ENCODE measurements at regions of chr6 and their contacts with region 1.

Region 1: DNA sequence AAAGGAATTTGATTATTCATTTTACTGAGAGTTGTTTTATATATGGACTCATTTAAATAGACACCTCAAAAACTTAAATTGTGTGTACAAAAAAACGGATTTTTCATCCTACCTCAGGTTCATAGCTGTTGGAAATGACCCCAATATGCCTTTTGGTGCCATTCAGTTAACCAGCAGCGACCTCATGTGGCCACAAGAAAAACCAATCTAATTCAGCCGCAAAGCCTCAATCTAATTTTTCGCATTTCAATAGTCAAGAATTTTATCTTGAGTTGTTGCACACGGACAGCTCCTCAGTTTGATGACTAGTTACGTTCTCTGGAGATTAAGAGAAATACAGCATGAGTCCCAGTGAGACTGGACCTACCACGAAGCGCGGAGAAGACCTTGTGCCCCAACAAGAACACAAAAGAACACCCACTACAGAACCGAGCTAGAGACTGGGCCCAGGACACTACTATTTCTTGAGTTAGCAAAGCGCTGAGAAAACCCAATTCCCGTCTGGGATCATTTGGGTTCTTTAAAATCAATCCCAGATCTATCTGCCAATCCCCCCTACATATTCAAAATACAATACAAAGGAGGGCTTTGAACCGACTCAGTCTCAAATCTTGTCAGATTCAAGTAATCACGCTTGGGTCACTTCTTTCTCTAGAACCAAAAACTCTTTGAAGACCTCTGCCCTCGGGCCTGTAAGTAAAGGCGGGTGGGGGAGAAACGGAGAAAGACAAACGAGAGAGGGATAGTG is 1.1 kb downstream of the TCP11 start:
- DNase-seq: peak; percentile 70
- H3K4me3 Mint-ChIP-seq: no peak overlapping the region
- H3K27ac Mint-ChIP-seq: no peak overlapping the region
- H3K4me1 Mint-ChIP-seq: peaks cover 4% of the 10 kb centered on the region
- H3K27me3 Mint-ChIP-seq: no peaks in the 10 kb centered on the region
- CTCF ChIP-seq: peak; percentile 91

Region 2: DNA sequence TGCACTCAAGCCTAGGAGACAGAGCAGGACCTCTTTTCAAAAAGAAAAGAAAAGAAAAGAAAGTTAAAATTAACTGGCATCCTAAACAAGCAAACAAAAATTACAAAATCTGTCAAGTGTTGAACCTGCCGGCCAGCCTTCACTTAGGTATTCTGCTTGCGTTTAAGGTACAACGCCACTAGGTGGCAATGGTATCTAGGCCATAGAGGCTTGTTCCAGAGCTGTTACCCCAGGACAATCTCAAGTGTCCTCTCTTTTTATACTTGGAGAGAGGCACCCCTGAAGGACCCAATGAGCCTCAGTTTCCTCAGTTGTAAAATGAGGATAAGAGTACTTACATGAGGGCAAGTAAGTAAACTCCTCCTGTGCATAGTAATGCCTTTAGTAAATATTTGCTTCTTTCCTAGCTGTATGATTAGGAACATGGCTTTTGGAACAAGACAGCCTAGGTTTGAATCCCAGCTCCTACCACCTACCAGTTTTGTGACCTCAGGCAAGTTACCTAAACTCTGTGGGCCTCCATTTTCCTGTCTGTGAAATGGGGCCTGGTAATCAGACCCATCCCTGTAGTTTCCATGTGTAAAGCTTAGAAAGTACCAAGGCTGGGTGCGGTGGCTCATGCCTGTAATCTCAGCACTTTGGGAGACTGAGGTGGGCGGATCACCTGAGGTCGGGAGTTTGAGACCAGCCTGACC is 680.0 kb before region 1 on chr6:
- CTCF ChIA-PET with region 1: interaction called, 8 read pairs
- POLR2A ChIA-PET with region 1: no interaction called
- intact Hi-C with region 1: loop called (anchors 1 kb)
- DNase-seq: peak; percentile 63
- H3K4me3 Mint-ChIP-seq: no peak overlapping the region
- H3K27ac Mint-ChIP-seq: no peak overlapping the region
- H3K4me1 Mint-ChIP-seq: peaks cover 6% of the 10 kb centered on the region
- H3K27me3 Mint-ChIP-seq: no peaks in the 10 kb centered on the region
- CTCF ChIP-seq: peak; percentile 73

Region 3: GRCh38 chr6:34560366-34561226 is 579.5 kb before region 1 on chr6:
- CTCF ChIA-PET with region 1: no interaction called
- POLR2A ChIA-PET with region 1: no interaction called
- intact Hi-C with region 1: no loop called
- DNase-seq: no peak
- H3K4me3 Mint-ChIP-seq: no peak overlapping the region
- H3K27ac Mint-ChIP-seq: no peak overlapping the region
- H3K4me1 Mint-ChIP-seq: no peaks in the 10 kb centered on the region
- H3K27me3 Mint-ChIP-seq: no peaks in the 10 kb centered on the region
- CTCF ChIP-seq: no peak

Region 4: DNA sequence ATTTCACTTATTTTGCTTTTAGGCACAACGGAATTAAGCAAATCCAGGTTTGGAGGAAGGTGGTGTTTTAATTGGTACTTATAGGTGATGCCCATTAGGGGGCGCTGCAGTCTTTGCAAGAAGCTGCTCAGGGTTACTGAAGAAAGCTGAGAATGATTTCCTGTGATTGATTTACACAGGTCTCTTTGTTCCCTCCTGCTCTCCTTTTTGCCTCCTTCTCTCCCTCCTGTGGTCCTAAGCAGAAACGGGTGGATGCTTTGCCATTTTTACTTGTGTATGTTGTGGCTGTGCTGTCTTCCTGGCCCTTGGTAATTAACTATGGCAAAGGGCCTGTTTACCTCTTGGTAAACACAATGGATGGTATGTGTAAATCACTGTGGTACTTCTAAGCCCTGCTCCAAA is 153.2 kb before region 1 on chr6:
- CTCF ChIA-PET with region 1: interaction called, 44 read pairs
- POLR2A ChIA-PET with region 1: interaction called, 3 read pairs
- intact Hi-C with region 1: loop called (anchors 1 kb)
- DNase-seq: peak; percentile 78
- H3K4me3 Mint-ChIP-seq: no peak overlapping the region
- H3K27ac Mint-ChIP-seq: no peak overlapping the region
- H3K4me1 Mint-ChIP-seq: no peaks in the 10 kb centered on the region
- H3K27me3 Mint-ChIP-seq: no peaks in the 10 kb centered on the region
- CTCF ChIP-seq: peak; percentile 84

Region 5: DNA sequence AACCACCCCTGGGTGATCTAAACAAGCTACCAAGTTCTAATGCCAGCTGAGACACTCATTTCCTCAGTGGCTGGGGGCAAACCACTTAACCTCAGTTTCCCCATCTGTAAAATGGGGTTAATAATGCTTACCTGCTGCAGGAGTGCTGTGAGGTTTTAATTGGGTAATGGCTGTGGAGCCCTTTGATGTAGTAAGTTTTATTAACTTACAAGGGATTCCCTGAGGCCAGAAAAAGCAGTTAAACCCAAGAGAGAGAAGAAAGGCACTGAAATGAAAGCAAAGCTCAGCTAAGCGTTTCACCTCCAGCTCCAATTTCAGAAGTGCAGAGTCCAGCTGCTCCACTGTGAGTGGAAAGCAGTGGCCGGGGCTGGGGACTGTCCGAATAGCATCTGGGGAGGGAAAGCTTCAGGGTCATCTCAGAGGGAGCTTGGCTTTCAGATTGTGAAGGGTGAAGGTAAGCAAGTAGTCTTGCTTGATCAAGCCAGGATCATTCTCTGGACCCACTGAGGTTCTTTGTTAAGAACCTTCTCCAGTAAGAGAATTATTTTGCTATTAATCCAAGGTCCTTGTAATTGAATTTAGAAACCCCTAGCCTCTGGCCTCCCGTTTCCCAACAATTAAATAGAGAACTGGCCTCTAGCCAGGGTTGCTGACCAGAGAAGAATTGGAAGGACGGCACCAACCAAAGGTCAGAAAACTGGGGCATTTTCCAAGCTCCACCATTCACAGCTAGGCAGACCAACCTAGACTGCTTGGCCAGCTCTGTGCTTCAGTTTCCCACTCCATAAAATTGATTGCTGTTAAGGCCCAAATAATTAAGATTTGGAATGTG is 21.9 kb after region 1 on chr6:
- CTCF ChIA-PET with region 1: interaction called, 14 read pairs
- POLR2A ChIA-PET with region 1: no interaction called
- intact Hi-C with region 1: no loop called
- DNase-seq: no peak
- H3K4me3 Mint-ChIP-seq: no peak overlapping the region
- H3K27ac Mint-ChIP-seq: no peak overlapping the region
- H3K4me1 Mint-ChIP-seq: peaks cover 8% of the 10 kb centered on the region
- H3K27me3 Mint-ChIP-seq: no peaks in the 10 kb centered on the region
- CTCF ChIP-seq: no peak

Region 6: DNA sequence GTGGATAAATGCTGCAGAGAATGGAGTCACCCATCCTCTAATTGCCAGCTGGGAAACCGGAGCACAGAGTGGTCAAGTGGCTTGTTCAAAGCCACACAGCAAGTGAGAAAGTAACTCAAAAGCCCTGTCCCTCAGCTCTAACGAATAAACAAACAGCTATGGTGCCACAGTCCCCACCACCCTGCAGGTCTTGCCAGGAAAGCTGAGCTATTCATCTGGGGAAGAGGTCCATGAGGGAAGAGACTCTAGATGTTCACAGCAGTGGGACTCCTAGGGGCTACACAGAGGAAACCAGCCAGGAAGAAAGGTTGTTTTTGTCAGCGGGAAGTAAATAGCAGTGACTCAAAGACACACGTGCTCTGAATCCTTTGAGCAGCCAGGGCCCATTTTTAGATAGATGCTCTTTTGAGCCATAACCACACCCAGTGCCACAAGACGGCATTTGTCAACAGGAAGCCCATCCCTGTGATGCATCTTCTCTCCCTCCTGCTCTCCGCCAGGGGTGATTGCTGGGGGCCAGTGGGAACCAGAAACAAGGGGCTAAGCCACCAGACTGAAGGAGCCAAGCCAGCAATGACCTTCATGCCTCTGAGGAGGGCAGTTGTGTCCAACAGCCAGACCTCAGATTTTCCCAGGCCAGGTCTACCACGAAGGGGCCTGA is 33.5 kb after region 1 on chr6:
- CTCF ChIA-PET with region 1: no interaction called
- POLR2A ChIA-PET with region 1: no interaction called
- intact Hi-C with region 1: no loop called
- DNase-seq: no peak
- H3K4me3 Mint-ChIP-seq: no peak overlapping the region
- H3K27ac Mint-ChIP-seq: peak overlapping the region; percentile 47
- H3K4me1 Mint-ChIP-seq: peaks cover 15% of the 10 kb centered on the region
- H3K27me3 Mint-ChIP-seq: no peaks in the 10 kb centered on the region
- CTCF ChIP-seq: no peak